ENCODE measurements at regions of chr5 and their contacts with region 1.

Region 1: GRCh38 chr5:124996764-124997077 is 250.3 kb upstream of the ZNF608 start:
- DNase-seq: no peak
- H3K4me3 ChIP-seq: no peak overlapping the region
- H3K27ac ChIP-seq: no peak overlapping the region
- H3K4me1 ChIP-seq: no peaks in the 10 kb centered on the region
- H3K27me3 ChIP-seq: no peaks in the 10 kb centered on the region
- CTCF ChIP-seq: no peak

Region 2: GRCh38 chr5:124948062-124948753 is 48.5 kb before region 1 on chr5:
- CTCF ChIA-PET with region 1: no interaction called
- dilution Hi-C with region 1: loop called (anchors 5 kb)
- in situ Hi-C with region 1: no loop called
- intact Hi-C with region 1: no loop called
- DNase-seq: peak; percentile 43
- H3K4me3 ChIP-seq: no peak overlapping the region
- H3K27ac ChIP-seq: peak overlapping the region; percentile 8
- H3K4me1 ChIP-seq: peaks cover 18% of the 10 kb centered on the region
- H3K27me3 ChIP-seq: no peaks in the 10 kb centered on the region
- CTCF ChIP-seq: no peak